ENCODE measurements at regions of chr6 and their contacts with region 1.

Region 1: GRCh38 chr6:136526196-136526930 is 23.9 kb downstream of the MAP7 start:
- DNase-seq: peak in 2 of 4 experiments; percentile 39 to 70
- ATAC-seq: peak; percentile 92
- H3K4me3 ChIP-seq: no peak overlapping the region
- H3K27ac ChIP-seq: no peak overlapping the region
- H3K4me1 ChIP-seq: 0 out of 5 replicates have a peak, but pooled peaks cover 0 to 3% of the 10 kb centered on the region in 2 experiments
- H3K27me3 ChIP-seq: peaks cover 2 to 16% of the 10 kb centered on the region in 2 experiments; a peak in 4 of 5 replicates
- CTCF ChIP-seq: peak; percentile 17 to 74 (median 47); a peak in 4 of 6 replicates
- EP300 ChIP-seq: no peak
- POLR2A ChIP-seq: no peak
- RAD21 ChIP-seq: peak; percentile 45 to 57

Region 2: GRCh38 chr6:136312975-136313374 is 213.4 kb before region 1 on chr6:
- CTCF ChIA-PET with region 1: no interaction called
- POLR2A ChIA-PET with region 1: no interaction called
- in situ Hi-C with region 1: no loop called
- intact Hi-C with region 1: no loop called
- DNase-seq: no peak
- ATAC-seq: no peak
- H3K4me3 ChIP-seq: no peak overlapping the region
- H3K27ac ChIP-seq: no peak overlapping the region
- H3K4me1 ChIP-seq: no peaks in the 10 kb centered on the region; a peak in 2 of 5 replicates
- H3K27me3 ChIP-seq: peaks cover 2 to 6% of the 10 kb centered on the region in 2 experiments; a peak in 3 of 5 replicates
- CTCF ChIP-seq: no peak
- EP300 ChIP-seq: no peak
- POLR2A ChIP-seq: no peak
- RAD21 ChIP-seq: no peak

Region 3: DNA sequence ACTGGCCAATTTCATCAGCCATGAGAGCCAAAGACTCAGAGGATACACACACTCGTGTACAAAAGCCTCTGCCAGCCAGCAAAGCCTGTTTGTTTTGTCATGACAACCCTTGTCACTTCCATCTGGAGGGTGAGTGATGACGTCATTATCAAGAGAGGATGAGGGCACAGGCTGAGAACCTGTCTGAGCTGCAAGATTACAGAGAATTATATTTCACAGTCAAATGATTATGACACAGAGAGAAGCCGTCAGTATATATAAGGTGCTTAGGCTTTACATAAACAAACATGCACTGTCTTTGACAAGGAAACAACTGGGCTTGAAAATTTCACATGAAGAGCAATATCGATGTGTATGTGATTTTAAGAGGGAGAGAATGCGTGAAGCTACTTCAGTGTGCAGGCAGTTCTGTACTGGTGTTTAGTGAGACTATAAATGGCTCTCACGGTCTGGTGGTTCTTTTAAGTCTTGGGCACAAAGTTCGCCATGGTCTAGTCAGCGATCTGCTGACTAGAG is 200.3 kb before region 1 on chr6:
- CTCF ChIA-PET with region 1: no interaction called
- POLR2A ChIA-PET with region 1: no interaction called
- in situ Hi-C with region 1: loop called (anchors 25 kb)
- intact Hi-C with region 1: no loop called
- DNase-seq: peak in 1 of 4 experiments; percentile 44
- ATAC-seq: no peak; the same call in 2 of the 3 replicates
- H3K4me3 ChIP-seq: no peak overlapping the region
- H3K27ac ChIP-seq: no peak overlapping the region
- H3K4me1 ChIP-seq: no peaks in the 10 kb centered on the region
- H3K27me3 ChIP-seq: peaks cover 10 to 14% of the 10 kb centered on the region in 2 experiments
- CTCF ChIP-seq: no peak
- EP300 ChIP-seq: no peak
- POLR2A ChIP-seq: no peak
- RAD21 ChIP-seq: no peak